Left cardiac atrium (tissue), 4 donors: ENCODE measurements at regions of chr3 and their contacts with region 1.

Region 1: GRCh38 chr3:46895204-46895660 is 17.7 kb downstream of the PTH1R start:
- DNase-seq: peak; percentile 84
- ATAC-seq: peak; percentile 42 to 56

Region 2: DNA sequence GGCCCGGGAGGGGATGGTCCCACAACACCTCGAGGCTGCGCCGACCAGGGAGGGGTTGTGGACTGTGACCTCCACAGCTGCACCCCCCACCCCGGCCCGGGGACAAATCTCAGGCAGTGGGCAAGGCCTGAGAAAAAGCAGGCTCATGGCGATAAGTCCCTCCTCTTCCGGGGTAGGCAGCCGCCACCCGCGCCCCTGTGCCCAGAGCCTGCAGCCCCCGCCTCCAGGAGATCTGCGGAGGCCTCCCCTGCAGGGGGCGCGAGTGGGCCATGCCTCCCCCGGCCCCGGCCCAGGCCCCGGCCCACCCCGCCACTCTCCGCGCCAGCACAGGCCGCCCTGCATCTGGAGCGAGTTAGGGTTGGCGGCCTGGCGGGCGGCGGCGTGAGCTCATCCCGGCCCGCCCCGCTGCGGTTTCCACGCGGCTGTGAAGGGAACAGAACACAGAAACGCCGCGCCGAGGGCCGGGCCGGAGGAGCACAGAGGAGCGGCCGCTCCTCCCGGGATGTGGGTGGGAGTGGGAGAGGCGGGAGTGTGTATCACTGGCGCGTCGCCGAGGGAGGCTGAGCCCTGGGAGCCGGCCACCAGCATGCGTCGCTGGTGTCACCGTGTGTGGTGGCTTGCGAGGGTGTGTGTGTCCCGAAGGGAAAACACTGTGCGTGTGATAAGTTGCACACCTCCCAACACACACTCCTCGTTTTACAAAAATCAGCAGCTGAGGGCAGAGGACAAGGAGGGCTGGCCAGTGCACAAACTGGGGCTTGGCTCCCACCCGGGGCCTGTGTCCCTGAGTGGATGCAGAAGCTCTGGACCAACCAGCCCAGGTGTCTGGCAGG is 49.2 kb before region 1 on chr3:
- intact Hi-C with region 1: loop called in 1 of 2 experiments (anchors 5 kb)
- DNase-seq: peak; percentile 81
- ATAC-seq: peak; percentile 85 to 87

Region 3: GRCh38 chr3:46866720-46867549 is 28.3 kb before region 1 on chr3:
- intact Hi-C with region 1: loop called in 1 of 2 experiments (anchors 2 kb)
- DNase-seq: peak; percentile 89
- ATAC-seq: peak; percentile 41 to 71

Region 4: GRCh38 chr3:47009225-47010110 is 114.2 kb after region 1 on chr3:
- intact Hi-C with region 1: no loop called
- DNase-seq: peak; percentile 92
- ATAC-seq: peak; percentile 94 to 96